Activated CD4-positive, alpha-beta T cell treated with anti-CD3 and anti-CD28 coated beads for 36 hours (primary cell): ENCODE measurements at regions of chr5 and their contacts with region 1.

Region 1: GRCh38 chr5:177351385-177352329 is at the start of gene LMAN2:
- DNase-seq: peak; percentile 95
- ATAC-seq: peak; percentile 99
- H3K4me3 Mint-ChIP-seq: peak within 1 kb of the TSS; percentile 89
- H3K27ac Mint-ChIP-seq: peak within 1 kb of the TSS; percentile 99
- H3K4me1 Mint-ChIP-seq: peaks cover 48% of the 10 kb centered on the region
- H3K27me3 Mint-ChIP-seq: no peaks in the 10 kb centered on the region
- total RNA-seq, gene LMAN2: 74.5 to 92.1 TPM

Region 2: GRCh38 chr5:177133091-177133852 is 218.4 kb before region 1 on chr5 and contains the start of gene NSD1:
- CTCF ChIA-PET with region 1: no interaction called
- POLR2A ChIA-PET with region 1: no interaction called
- intact Hi-C with region 1: loop called in 1 of 2 experiments (anchors 1 kb)
- DNase-seq: peak; percentile 95
- ATAC-seq: peak; percentile 81
- H3K4me3 Mint-ChIP-seq: peak within 1 kb of the TSS; percentile 91
- H3K27ac Mint-ChIP-seq: peak within 1 kb of the TSS; percentile 89
- H3K4me1 Mint-ChIP-seq: peaks cover 48% of the 10 kb centered on the region
- H3K27me3 Mint-ChIP-seq: no peaks in the 10 kb centered on the region
- total RNA-seq, gene NSD1: 65.6 to 68.2 TPM

Region 3: GRCh38 chr5:177311723-177312648 is 39.7 kb before region 1 on chr5 and contains the start of gene MXD3:
- CTCF ChIA-PET with region 1: interaction called, 16 read pairs
- POLR2A ChIA-PET with region 1: no interaction called
- intact Hi-C with region 1: loop called (anchors 1 to 2 kb)
- DNase-seq: peak; percentile 99
- ATAC-seq: peak; percentile 88
- H3K4me3 Mint-ChIP-seq: peak within 1 kb of the TSS; percentile 85
- H3K27ac Mint-ChIP-seq: peak within 1 kb of the TSS; percentile 84
- H3K4me1 Mint-ChIP-seq: peaks cover 28% of the 10 kb centered on the region
- H3K27me3 Mint-ChIP-seq: no peaks in the 10 kb centered on the region
- total RNA-seq, gene MXD3: 21.3 to 27.2 TPM

Region 4: GRCh38 chr5:177431317-177432142 is 79.9 kb after region 1 on chr5:
- CTCF ChIA-PET with region 1: interaction called, 3 read pairs
- POLR2A ChIA-PET with region 1: interaction called, 7 read pairs
- intact Hi-C with region 1: loop called in 1 of 2 experiments (anchors 1 kb)
- DNase-seq: peak; percentile 81
- ATAC-seq: peak; percentile 19
- H3K4me3 Mint-ChIP-seq: peak overlapping the region; percentile 88
- H3K27ac Mint-ChIP-seq: peak overlapping the region; percentile 94
- H3K4me1 Mint-ChIP-seq: peaks cover 73% of the 10 kb centered on the region
- H3K27me3 Mint-ChIP-seq: no peaks in the 10 kb centered on the region

Region 5: DNA sequence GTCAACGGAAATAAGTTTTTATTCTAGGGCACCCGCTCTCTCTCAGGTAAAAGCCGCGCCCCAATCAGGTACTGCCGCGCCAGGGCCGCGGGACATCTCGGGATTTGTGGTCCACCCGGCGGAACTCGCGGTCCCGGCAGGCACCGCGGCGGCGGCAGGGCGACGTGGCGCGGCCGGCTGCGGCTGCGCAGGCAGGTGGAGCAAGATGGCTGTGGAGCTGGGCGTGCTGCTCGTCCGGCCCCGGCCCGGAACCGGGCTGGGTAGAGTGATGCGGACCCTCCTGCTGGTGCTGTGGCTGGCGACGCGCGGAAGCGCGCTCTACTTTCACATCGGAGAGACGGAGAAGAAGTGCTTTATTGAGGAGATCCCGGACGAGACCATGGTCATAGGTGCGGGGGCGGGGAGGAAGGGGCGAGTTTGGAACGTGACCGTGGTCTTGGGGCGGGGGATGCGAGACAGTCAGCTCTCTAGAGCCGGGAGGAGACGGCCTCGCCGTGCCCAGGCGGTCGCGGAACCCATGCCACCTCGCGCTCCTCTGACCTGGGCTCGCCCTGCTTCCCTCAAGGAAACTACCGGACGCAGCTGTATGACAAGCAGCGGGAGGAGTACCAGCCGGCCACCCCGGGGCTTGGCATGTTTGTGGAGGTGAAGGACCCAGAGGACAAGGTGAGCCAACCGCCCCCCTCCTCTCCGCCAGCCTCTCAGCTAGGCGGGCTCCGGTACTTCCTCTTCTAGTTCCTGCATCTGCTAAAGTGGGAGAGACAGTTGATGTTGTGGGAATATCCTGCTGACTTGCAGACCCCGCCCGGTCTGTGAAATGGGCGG is 240.6 kb after region 1 on chr5 and contains the start of gene TMED9:
- CTCF ChIA-PET with region 1: no interaction called
- POLR2A ChIA-PET with region 1: no interaction called
- intact Hi-C with region 1: loop called in 1 of 2 experiments (anchors 2 kb)
- DNase-seq: peak; percentile 94
- ATAC-seq: peak; percentile 97
- H3K4me3 Mint-ChIP-seq: peak within 1 kb of the TSS; percentile 98
- H3K27ac Mint-ChIP-seq: peak within 1 kb of the TSS; percentile 99
- H3K4me1 Mint-ChIP-seq: peaks cover 29% of the 10 kb centered on the region
- H3K27me3 Mint-ChIP-seq: peaks cover 5% of the 10 kb centered on the region
- total RNA-seq, gene TMED9: 83.2 to 109 TPM